Breast epithelium (tissue), 4 donors: ENCODE measurements at regions of chr2 and their contacts with region 1.

Region 1: DNA sequence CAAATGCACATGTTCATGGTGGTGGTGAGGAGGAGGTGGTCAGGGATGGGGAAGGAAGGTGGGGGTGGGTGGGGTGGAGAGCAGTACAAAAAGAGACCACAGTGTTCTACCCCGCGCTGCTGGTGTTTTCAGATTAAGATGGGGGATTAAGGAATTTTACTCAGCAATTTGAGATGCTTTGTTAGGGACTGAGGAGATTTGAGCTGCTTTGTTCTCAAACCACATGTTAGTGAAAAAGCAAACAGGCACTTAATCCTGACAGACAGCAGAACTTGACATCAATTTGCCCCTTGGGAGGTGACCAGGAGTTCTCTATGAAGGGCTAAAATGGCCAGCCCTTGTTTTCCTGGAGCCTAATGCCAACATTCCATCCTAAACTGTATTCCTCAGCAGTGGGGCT is 244.5 kb downstream of the MEIS1 start:
- DNase-seq: no peak
- H3K4me3 ChIP-seq: no peak overlapping the region
- H3K27ac ChIP-seq: no peak overlapping the region
- H3K4me1 ChIP-seq: no peaks in the 10 kb centered on the region
- H3K27me3 ChIP-seq: no peaks in the 10 kb centered on the region
- CTCF ChIP-seq: no peak
- POLR2A ChIP-seq: no peak

Region 2: DNA sequence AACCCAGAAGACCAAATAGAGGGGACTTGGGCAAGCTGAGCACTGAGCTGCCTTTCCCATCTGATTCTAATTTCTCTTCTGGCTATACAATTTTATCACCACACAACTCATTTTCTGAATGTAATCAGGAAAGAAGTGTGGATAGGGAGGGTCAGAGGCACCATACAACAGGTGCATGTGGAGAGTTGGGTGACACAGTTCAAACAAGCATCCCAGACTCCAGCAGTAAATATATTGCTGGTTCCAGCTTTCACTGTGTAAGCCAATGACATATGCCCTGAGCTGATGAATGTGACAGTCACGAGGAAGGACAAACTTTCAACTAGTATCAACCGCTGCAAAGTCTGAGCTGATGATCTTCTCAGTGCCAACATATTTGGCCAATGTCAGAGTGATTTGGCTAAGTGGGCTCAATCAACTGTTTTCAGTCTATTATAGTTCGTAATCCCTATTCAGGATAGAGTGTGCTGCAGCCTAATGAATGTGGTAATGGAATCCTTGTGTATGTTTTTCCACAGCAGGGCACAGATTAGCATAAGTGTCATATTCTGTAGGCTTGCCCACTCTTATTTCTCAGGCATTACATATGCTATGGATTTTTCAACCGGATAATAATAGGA is 354.4 kb before region 1 on chr2:
- intact Hi-C with region 1: no loop called
- DNase-seq: no peak
- H3K4me3 ChIP-seq: no peak overlapping the region
- H3K27ac ChIP-seq: no peak overlapping the region
- H3K4me1 ChIP-seq: no peaks in the 10 kb centered on the region
- H3K27me3 ChIP-seq: no peaks in the 10 kb centered on the region
- CTCF ChIP-seq: no peak
- POLR2A ChIP-seq: no peak

Region 3: DNA sequence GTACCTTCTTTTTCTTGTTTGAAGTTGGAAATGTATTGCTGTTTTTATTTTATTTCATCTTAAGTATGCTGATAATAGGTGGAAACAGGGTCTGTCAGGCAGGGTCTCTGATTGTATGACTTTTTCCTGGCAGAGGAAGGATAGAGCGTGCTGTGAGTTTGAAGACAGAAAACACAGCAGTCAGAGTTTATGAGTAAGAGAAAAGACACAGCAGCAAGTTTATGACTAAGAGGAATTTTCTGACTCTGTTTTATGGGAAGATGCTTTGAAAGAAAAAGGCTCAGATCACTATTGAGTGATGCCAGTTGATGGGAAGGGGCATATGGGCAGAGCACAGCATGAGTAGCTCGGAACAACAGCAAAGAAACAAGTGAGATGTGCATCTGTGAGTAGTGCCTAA is 134.5 kb after region 1 on chr2:
- intact Hi-C with region 1: loop called (anchors 5 kb)
- DNase-seq: no peak
- H3K4me3 ChIP-seq: no peak overlapping the region
- H3K27ac ChIP-seq: no peak overlapping the region
- H3K4me1 ChIP-seq: no peaks in the 10 kb centered on the region
- H3K27me3 ChIP-seq: no peaks in the 10 kb centered on the region
- CTCF ChIP-seq: no peak
- POLR2A ChIP-seq: no peak